ENCODE measurements at regions of chr5 and their contacts with region 1.

Region 1: DNA sequence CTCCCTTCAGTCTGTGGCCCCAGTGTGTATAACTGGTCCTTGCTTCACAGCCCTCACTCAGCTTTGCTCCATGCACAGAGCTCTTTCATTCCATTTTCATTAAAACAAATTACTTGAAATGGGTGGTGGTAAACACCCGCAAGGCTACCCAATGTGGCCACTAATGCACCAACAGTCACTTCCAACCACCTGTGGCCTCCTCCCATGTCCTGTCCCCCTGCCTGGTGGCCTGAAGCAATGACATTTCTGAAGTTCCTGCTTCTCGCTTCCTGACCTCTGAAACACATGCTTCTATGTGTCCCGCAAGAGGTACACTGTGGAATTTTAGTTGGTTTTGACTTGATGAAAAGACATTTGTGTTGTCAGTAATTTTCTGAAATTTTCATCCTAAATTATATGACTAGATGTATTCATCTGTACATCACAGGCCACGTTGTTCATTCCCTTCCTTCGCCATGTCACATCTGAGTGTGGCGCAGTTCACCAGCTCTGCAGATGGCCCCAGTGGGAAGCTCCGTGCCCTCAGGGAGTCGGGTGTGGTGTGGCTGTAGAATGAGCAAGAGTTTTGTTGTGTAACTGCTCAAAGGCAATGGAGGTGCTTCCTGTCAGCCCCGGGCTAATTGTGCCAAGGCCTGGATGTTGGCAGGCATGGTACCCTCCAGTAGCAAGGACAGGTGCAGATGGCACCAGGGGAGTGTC is 9.6 kb downstream of the ROPN1L start:
- DNase-seq: no peak
- ATAC-seq: no peak

Region 2: GRCh38 chr5:10030210-10030831 is 421.0 kb before region 1 on chr5:
- intact Hi-C with region 1: no loop called
- DNase-seq: no peak
- ATAC-seq: no peak

Region 3: DNA sequence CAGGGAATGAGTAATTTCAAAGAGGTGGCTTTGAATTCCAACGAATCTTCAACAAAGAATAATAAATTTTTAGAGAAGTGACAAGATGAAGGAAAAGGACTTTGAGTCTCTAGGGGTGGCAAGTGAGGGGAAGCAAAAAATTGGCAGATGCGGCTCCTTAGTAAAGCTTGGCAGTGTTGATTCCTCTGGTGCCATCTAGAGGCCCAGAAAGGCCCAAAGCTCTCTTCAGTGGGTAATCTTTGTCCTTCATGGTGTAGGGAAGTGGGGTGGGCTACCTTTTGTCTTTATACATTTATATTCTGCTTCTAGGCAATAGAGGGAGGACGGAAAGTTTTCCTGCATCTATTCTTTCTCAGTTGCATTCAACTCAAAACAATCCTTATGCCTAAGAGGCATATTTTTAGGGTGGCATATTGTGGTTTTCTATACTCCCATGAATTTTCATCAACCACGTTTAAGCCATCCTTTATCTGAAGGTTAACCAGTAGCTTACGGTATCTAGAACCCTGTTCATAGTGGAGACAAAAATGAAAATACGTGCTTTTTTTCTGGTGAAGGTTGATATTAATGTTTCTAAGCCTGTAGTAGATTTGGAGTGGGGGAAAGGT is 27.1 kb before region 1 on chr5:
- intact Hi-C with region 1: no loop called
- DNase-seq: no peak
- ATAC-seq: peak; percentile 67

Region 4: GRCh38 chr5:10631597-10631996 is 180.3 kb after region 1 on chr5:
- intact Hi-C with region 1: loop called (anchors 2 kb)
- DNase-seq: no peak
- ATAC-seq: no peak

Measured in sciatic nerve (tissue), 2 donors.